Dorsolateral prefrontal cortex (tissue), 120 donors: ENCODE measurements at regions of chr1 and their contacts with region 1.

Region 1: DNA sequence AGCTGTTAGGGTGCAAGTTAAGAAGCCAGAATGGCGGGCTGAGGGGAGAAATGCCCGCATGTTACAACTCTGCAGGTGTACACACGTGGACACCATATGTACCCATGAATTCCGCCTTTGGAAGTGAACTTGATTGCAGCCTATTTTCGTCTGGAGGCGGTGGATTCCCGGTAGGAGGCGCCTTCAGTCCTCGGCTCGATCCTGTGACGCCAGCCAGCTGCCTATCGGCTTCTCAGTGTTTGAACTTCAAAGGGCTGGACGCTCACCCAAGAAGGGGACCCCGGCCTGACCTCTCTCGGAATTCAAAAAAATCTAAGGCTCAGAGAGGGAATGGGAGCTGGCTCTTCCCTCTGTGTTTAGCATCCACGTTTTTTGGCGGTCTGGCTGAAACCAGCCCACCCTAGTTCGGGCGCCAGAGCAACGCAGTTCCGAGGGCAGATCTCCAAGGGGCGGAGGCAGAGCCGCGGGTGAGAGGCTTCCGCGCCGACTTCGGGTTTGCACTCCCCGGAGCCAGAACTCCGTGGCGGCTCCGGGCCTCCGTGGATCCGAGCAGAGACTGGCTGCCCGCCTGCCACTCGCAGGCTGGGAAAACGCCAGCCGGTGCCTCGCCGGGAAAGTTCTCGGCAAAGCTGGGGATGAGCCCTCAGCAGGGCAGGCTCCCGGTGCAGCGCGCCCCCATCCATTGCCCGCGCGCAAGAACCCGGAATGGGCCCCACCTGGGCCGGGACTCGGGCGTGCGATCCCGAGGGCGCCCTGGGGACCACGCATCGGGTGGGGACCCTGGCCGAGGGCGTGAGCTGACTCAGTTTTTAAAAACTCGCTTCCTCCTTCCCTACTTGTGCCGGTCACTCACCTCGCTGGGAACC is 996 bp upstream of the TMEM51 start:
- DNase-seq: peak; percentile 58 to 86 (median 82)
- H3K4me3 ChIP-seq: peak overlapping the region; percentile 52 to 89 (median 69)
- H3K27ac ChIP-seq: peak overlapping the region in 52 of 59 donors; percentile 18 to 91 (median 77)
- H3K27me3 ChIP-seq: peaks cover 0 to 4% (median 0%) of the 10 kb centered on the region in 45 donors
- CTCF ChIP-seq: peak; percentile 32 to 90 (median 72)

Region 2: DNA sequence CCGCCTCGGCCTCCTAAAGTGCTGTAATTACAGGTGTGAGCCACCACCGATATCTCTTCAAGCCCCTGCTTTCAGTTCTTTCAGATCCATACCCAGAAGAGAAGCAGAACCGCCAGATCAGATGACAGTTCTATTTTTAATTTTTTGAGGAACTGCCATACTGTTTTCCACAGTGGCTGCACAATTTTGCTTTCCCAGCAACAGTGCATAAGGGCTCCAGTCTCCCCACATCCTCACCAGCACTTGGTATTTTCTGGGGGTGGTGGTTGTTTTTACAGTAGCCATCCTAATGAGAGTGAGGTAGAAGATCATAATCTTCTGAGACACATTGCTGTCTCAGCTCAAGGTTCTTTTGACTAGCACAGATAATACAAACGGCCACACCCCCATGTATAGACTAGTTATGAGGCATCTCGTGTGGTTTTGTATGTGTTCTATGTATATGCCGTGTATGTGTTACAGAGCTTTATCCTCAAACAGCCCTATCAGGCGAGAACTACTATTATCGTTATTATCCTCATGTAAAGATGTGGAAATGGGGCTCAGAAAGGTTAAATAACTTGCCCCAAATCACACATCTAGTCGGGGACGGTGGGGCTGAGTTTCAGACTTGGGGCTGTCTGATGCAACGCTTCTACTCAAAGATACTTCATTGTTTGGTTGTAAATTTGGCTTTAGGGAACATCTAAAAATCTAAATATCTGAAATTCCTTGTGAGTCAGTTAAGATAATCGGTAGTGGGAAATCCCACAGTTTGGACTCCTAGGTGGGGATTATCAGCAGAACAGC is 106.5 kb after region 1 on chr1:
- intact Hi-C with region 1: loop called in 1 of 2 experiments (anchors 5 kb)
- DNase-seq: no peak
- H3K4me3 ChIP-seq: no peak overlapping the region
- H3K27ac ChIP-seq: peak overlapping the region in 18 of 59 donors; percentile 3 to 75 (median 28)
- H3K27me3 ChIP-seq: no peaks in the 10 kb centered on the region
- CTCF ChIP-seq: no peak

Region 3: GRCh38 chr1:15272009-15272788 is 119.6 kb after region 1 on chr1:
- intact Hi-C with region 1: loop called (anchors 1 to 2 kb)
- DNase-seq: peak in 8 of 10 donors; percentile 40 to 71 (median 58)
- H3K4me3 ChIP-seq: peak overlapping the region in 26 of 59 donors; percentile 1 to 43 (median 28)
- H3K27ac ChIP-seq: no peak overlapping the region
- H3K27me3 ChIP-seq: peaks cover 0 to 15% (median 0%) of the 10 kb centered on the region in 45 donors
- CTCF ChIP-seq: peak; percentile 49 to 93 (median 80)

Region 4: DNA sequence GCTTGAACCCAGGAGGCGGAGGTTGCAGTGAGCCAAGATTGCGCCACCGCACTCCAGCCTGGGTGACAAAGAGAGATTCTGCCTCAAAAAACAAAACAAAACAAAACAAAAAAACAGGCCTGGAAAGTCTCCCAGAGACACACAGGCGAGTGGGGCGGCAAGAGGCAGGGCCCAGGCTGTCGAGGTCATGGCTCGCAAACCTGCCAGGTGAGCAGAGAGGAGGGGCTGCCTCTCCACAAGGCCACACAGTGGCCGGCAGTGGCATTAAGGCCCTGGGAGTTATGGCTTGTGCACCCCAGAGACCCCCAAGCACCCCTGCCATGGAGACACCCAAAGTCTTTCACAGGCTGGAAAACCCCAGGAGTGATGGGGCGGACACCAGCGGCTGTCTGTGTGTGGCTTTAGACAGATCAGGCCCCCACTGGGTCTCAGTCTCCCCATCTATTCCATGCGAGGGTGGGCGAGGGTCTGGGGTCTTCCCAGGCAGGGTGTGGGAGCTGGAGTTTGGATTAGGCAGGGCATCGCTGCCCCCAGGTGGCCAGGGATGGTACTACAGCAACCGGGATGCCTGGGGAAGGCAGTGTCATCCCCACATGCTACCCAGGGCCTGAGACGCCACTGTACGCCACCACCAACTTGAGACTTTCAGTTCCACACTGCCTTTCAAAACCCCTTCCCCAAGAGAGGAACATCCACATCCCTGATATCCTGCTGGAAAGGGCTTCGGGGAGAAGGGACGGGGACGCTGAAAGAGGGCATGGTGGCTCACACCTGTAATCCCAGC is 278.4 kb after region 1 on chr1:
- intact Hi-C with region 1: loop called (anchors 10 kb)
- DNase-seq: peak in 9 of 10 donors; percentile 67 to 82 (median 76)
- H3K4me3 ChIP-seq: no peak overlapping the region
- H3K27ac ChIP-seq: peak overlapping the region in 6 of 59 donors; percentile 11 to 53 (median 31)
- H3K27me3 ChIP-seq: no peaks in the 10 kb centered on the region
- CTCF ChIP-seq: peak; percentile 83 to 99 (median 95)

Region 5: GRCh38 chr1:15475752-15476314 is 323.3 kb after region 1 on chr1 and contains the start of gene CELA2B:
- intact Hi-C with region 1: no loop called
- DNase-seq: no peak
- H3K4me3 ChIP-seq: no peak within 1 kb of the TSS
- H3K27ac ChIP-seq: no peak within 1 kb of the TSS
- H3K27me3 ChIP-seq: no peaks in the 10 kb centered on the region
- CTCF ChIP-seq: no peak
- total RNA-seq, gene CELA2B: not detected

Region 6: GRCh38 chr1:15714406-15715136 is 562.0 kb after region 1 on chr1:
- intact Hi-C with region 1: no loop called
- DNase-seq: peak in 7 of 10 donors; percentile 45 to 64 (median 53)
- H3K4me3 ChIP-seq: peak overlapping the region in 2 of 59 donors; percentile 6 to 12
- H3K27ac ChIP-seq: peak overlapping the region; percentile 32 to 95 (median 82)
- H3K27me3 ChIP-seq: no peaks in the 10 kb centered on the region
- CTCF ChIP-seq: peak in 2 of 56 donors; percentile 12 to 36